AG04449 (cell line): ENCODE measurements at regions of chr20 and their contacts with region 1.

Region 1: DNA sequence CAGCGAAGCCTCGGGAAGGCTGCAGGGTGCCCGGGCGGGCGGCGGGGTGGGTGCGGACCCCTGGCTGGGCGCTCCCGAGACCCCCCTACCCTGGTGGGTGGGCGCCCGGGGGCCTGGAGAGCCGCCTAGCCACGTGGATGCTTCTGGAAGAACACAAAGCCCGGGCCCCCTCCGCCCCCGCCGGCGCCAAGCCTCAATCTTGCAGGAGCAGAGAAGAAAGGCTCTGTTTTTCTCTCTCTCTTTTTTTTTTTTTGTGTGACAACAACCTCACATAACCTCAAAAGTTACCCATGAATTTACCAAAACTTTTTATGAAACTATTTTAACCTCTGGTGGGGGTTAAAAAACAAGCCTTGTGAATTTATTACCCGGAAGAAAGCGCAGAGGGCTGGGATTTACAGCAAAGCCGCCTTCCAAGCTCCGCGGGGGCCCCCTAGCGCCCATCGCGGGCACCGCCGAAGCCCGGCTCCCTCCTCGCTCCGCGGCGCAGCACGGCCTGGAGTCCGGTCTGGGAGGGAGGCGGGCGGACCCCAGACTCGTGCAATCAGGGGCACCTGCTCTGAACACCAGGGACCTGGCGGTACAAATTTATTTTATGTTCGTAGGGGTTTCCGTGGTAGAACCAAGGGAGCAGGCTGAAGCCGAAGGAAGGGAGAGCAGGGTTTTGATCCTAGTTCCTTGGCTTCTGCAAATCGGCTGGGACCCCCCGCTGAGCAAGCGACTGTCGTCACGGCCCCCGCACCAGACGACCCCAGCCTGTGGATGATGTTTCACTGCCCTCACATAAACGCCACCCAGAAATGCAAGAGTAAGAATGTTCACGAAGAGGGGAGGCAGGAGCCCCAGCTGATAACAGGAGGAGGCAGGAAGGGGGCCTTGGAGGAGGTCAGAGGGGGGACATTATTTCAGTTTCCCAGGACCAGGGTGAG is 58.9 kb downstream of the ZNF831 start:
- DNase-seq: peak; percentile 12
- H3K4me3 ChIP-seq: peak overlapping the region; percentile 48
- CTCF ChIP-seq: peak; percentile 94

Region 2: DNA sequence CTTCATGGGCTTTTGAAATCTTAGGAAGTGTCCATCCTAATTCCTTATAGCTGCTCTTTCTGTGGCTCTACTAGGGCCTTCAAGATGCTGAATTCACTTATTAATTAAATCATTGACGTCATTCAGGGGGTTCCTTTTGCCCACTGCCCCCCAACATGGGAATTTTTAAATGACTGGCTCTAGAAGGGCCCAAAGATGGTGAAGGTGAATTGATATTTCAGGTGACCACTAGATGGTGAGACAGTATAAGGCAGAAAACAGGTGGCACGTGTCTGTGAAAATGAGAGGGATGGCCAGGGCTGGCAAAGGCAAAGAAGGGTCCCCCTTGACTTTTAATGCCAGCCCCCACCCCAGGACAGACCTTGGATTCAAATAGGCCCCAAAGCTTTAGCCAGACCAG is 358.2 kb before region 1 on chr20:
- CTCF ChIA-PET with region 1: interaction called, 114 read pairs
- POLR2A ChIA-PET with region 1: no interaction called
- DNase-seq: no peak
- H3K4me3 ChIP-seq: no peak overlapping the region
- CTCF ChIP-seq: no peak

Region 3: DNA sequence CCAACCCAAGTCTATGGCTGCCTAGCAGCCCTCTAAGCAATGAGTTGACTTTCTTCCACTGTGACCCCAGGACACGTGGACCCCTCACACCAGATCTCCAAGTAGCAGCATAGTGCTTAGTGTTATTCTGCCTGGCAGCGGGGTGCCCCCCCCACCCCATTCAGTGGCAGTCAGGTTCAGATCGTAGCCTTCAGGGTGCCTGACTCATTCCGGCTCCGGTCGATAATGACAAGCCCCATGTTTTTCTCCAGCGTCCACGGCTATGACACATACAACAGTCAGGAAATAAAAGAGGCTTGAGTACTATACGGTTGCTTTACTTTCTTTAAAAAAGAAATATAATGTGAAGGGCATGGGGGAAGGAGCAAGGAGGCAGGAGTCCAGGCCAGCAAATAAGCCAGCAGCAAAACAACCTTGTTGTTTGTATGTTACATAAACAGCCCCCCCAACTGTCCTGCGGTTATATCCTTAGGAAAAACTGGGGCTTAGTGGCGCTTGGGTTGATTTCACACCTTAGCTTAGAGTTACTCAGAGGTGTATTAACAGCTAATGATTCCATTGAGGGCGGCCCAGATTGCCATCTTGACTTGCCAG is 346.9 kb before region 1 on chr20:
- CTCF ChIA-PET with region 1: interaction called, 114 read pairs
- POLR2A ChIA-PET with region 1: no interaction called
- DNase-seq: no peak
- H3K4me3 ChIP-seq: no peak overlapping the region
- CTCF ChIP-seq: no peak

Region 4: GRCh38 chr20:59087829-59088433 is 134.6 kb before region 1 on chr20:
- CTCF ChIA-PET with region 1: interaction called, 21 read pairs
- POLR2A ChIA-PET with region 1: no interaction called
- DNase-seq: no peak
- H3K4me3 ChIP-seq: no peak overlapping the region
- CTCF ChIP-seq: peak; percentile 81

Region 5: GRCh38 chr20:60037120-60037499 is 814.6 kb after region 1 on chr20:
- CTCF ChIA-PET with region 1: no interaction called
- POLR2A ChIA-PET with region 1: no interaction called
- DNase-seq: no peak
- H3K4me3 ChIP-seq: no peak overlapping the region
- CTCF ChIP-seq: peak; percentile 66